ENCODE measurements at regions of chr16 and their contacts with region 1.

Region 1: GRCh38 chr16:56673921-56674320 is 4.3 kb downstream of the MT1H start:
- DNase-seq: no peak
- H3K4me3 ChIP-seq: no peak overlapping the region
- H3K27ac ChIP-seq: no peak overlapping the region
- H3K4me1 ChIP-seq: no peaks in the 10 kb centered on the region
- H3K27me3 ChIP-seq: no peaks in the 10 kb centered on the region
- CTCF ChIP-seq: peak in 1 of 3 donors; percentile 23
- EP300 ChIP-seq: no peak
- POLR2A ChIP-seq: no peak

Region 2: DNA sequence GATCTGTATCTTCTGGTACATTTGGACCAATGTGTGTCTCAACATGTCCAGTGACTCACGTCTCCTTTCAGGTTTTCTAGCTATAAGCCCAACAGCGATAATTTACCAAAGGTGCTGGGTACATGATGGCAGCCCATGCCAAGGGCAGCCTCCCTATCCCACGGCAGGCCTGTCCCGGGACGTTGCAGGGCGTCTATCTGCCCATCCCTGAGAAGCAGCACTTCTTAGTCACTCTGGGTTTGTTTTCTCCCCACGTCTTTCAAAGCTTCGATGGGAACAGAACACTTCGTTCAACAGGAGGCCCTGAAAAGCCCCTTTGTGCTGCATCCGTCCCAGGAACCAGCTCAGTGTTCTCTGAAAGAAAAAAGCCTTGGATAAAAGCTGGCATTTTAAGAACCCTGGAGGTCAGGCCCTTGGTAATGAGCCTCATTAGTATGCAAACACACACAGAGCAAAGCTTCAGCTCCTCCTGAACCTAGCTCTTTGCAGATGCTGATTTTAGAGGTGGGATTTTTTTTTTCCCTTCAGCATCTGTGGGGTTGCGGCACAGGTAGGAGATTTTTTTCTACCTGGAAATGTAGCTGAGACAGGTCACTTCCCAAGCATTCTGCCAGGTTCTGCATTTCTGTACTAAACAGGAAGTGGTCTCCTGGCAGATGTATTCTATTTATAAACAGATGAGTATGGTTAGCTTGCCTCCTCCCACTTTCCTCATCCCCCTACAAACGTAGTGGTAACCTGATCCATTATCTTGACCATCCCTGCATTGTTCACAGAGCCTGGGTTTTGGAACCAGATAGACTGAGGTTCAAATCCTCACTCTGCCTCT is 126.6 kb before region 1 on chr16:
- intact Hi-C with region 1: no loop called
- DNase-seq: no peak
- H3K4me3 ChIP-seq: no peak overlapping the region
- H3K27ac ChIP-seq: peak overlapping the region in 1 of 2 donors; percentile 5
- H3K4me1 ChIP-seq: no peaks in the 10 kb centered on the region
- H3K27me3 ChIP-seq: no peaks in the 10 kb centered on the region
- CTCF ChIP-seq: no peak
- EP300 ChIP-seq: no peak
- POLR2A ChIP-seq: no peak

Region 3: DNA sequence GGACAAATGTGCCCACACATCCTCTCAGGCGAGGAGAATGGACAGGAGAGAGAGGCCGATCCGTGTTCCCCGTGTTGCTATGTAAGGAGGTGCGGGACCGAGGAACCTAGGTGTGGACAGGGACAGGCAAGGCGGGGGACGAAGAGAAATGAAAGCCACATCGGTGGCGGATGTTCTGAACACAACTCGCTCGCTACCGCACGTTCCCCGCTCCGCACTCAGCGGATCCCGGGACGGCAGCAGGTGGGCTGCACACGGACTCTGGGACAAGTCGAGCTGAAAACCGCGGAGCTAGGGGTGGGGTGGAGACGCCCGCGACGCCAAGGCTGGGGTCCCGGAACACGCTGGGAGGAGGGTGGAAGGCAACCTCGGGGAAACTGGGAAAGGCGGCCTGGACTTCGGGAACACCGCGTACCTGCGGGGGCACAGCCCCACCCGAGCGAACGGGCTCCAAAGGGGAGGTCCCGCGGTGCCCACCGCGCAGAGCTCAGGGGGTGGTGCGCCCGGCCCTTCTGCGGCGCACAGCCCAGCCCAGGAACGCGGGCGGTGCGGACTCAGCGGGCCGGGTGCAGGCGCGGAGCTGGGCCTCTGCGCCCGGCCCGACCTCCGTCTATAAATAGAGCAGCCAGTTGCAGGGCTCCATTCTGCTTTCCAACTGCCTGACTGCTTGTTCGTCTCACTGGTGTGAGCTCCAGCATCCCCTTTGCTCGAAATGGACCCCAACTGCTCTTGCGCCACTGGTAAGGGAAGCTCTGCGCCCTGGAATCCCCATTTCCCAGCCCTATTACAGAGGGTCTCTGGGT is 48.6 kb before region 1 on chr16 and contains the start of gene MT1E:
- intact Hi-C with region 1: loop called in 1 of 4 experiments (anchors 10 kb)
- DNase-seq: peak; percentile 48 to 83 (median 68)
- H3K4me3 ChIP-seq: peak within 1 kb of the TSS; percentile 73
- H3K27ac ChIP-seq: peak within 1 kb of the TSS; percentile 65 to 79
- H3K4me1 ChIP-seq: peaks cover 6% of the 10 kb centered on the region
- H3K27me3 ChIP-seq: no peaks in the 10 kb centered on the region
- CTCF ChIP-seq: no peak
- EP300 ChIP-seq: peak; percentile 88
- POLR2A ChIP-seq: peak; percentile 59
- total RNA-seq, gene MT1E: 16.1 to 867 (median 65.3) TPM